ENCODE measurements at regions of chr5 and their contacts with region 1.

Region 1: GRCh38 chr5:51382763-51383490 is at the start of gene ISL1:
- DNase-seq: peak; percentile 55
- ATAC-seq: peak; percentile 94
- H3K4me3 ChIP-seq: peak within 1 kb of the TSS; percentile 34
- H3K27ac ChIP-seq: no peak within 1 kb of the TSS
- H3K4me1 ChIP-seq: no peaks in the 10 kb centered on the region
- H3K27me3 ChIP-seq: peaks cover 53% of the 10 kb centered on the region
- CTCF ChIP-seq: no peak
- POLR2A ChIP-seq: no peak
- RAD21 ChIP-seq: no peak
- total RNA-seq, gene ISL1: under 0.01 TPM in 1 of 2 replicates, not detected in the other

Region 2: DNA sequence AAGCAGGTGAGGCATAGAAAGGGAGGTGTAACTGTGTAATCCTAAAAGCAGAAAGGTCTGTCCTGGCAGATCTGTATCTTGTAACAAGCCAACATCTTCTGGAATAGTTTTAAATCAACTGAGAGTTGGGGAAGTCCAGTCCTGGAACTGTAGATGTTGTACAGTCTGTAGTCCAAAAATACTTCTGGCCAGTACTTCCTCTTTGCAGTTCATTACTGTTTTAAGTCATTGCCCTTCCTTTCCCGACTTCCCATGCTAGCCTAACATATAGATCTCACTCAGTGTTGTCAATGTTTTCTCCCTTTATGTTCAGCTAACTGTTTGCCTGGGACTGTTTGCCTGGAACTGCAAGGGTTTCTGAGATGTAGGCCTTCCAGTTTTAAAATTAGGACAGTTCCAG is 168.2 kb before region 1 on chr5:
- CTCF ChIA-PET with region 1: no interaction called
- POLR2A ChIA-PET with region 1: no interaction called
- dilution Hi-C with region 1: no loop called
- in situ Hi-C with region 1: no loop called
- intact Hi-C with region 1: no loop called
- DNase-seq: no peak
- ATAC-seq: no peak
- H3K4me3 ChIP-seq: no peak overlapping the region
- H3K27ac ChIP-seq: no peak overlapping the region
- H3K4me1 ChIP-seq: no peaks in the 10 kb centered on the region
- H3K27me3 ChIP-seq: no peaks in the 10 kb centered on the region
- CTCF ChIP-seq: no peak
- POLR2A ChIP-seq: no peak
- RAD21 ChIP-seq: no peak

Region 3: GRCh38 chr5:51495672-51496071 is 112.7 kb after region 1 on chr5:
- CTCF ChIA-PET with region 1: no interaction called
- POLR2A ChIA-PET with region 1: no interaction called
- dilution Hi-C with region 1: no loop called
- in situ Hi-C with region 1: no loop called
- intact Hi-C with region 1: no loop called
- DNase-seq: peak; percentile 6
- ATAC-seq: no peak
- H3K4me3 ChIP-seq: no peak overlapping the region
- H3K27ac ChIP-seq: no peak overlapping the region
- H3K4me1 ChIP-seq: no peaks in the 10 kb centered on the region
- H3K27me3 ChIP-seq: no peaks in the 10 kb centered on the region
- CTCF ChIP-seq: no peak
- POLR2A ChIP-seq: no peak
- RAD21 ChIP-seq: no peak

Region 4: DNA sequence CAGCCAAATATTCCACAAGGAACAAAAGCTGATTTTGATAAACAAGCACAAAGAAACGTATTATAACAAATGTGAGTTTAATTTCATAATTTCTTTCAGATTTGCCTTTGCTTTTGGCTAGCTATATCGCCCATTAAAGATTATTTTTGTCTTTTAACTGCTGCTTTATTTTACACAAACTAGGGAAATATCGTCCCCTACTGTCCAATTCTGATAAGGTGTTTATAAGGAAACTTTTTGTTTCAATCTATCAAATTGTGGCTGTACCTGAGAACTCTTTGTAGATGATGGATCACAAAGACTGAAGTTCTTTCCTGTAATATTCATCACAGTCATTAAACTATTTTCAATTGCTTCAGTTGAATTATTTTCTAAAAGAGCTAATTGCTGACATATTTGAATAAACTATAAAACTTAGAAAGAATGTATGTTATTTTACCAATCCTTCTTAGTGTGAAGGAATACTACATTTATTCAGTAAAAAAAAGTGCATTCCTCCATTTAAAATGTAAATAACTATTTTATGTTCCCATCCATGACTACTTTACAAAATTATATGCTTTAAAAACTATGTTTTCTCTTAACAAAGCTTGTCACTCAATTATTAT is 973.5 kb after region 1 on chr5:
- CTCF ChIA-PET with region 1: no interaction called
- POLR2A ChIA-PET with region 1: no interaction called
- dilution Hi-C with region 1: no loop called
- in situ Hi-C with region 1: no loop called
- intact Hi-C with region 1: loop called (anchors 5 kb)
- DNase-seq: peak; percentile 2
- ATAC-seq: no peak
- H3K4me3 ChIP-seq: no peak overlapping the region
- H3K27ac ChIP-seq: no peak overlapping the region
- H3K4me1 ChIP-seq: no peaks in the 10 kb centered on the region
- H3K27me3 ChIP-seq: no peaks in the 10 kb centered on the region
- CTCF ChIP-seq: peak; percentile 62
- POLR2A ChIP-seq: no peak
- RAD21 ChIP-seq: peak; percentile 46

Region 5: GRCh38 chr5:52657247-52657645 is 1274.3 kb after region 1 on chr5:
- CTCF ChIA-PET with region 1: no interaction called
- POLR2A ChIA-PET with region 1: no interaction called
- dilution Hi-C with region 1: no loop called
- in situ Hi-C with region 1: loop called (anchors 25 kb)
- intact Hi-C with region 1: loop called (anchors 2 kb)
- DNase-seq: peak; percentile 58
- ATAC-seq: peak; percentile 53
- H3K4me3 ChIP-seq: no peak overlapping the region
- H3K27ac ChIP-seq: no peak overlapping the region
- H3K4me1 ChIP-seq: no peaks in the 10 kb centered on the region
- H3K27me3 ChIP-seq: peaks cover 9% of the 10 kb centered on the region
- CTCF ChIP-seq: peak; percentile 61
- POLR2A ChIP-seq: no peak
- RAD21 ChIP-seq: peak; percentile 47